Activated CD4-positive, alpha-beta T cell treated with anti-CD3 and anti-CD28 coated beads for 36 hours (primary cell): ENCODE measurements at regions of chr20 and their contacts with region 1.

Region 1: DNA sequence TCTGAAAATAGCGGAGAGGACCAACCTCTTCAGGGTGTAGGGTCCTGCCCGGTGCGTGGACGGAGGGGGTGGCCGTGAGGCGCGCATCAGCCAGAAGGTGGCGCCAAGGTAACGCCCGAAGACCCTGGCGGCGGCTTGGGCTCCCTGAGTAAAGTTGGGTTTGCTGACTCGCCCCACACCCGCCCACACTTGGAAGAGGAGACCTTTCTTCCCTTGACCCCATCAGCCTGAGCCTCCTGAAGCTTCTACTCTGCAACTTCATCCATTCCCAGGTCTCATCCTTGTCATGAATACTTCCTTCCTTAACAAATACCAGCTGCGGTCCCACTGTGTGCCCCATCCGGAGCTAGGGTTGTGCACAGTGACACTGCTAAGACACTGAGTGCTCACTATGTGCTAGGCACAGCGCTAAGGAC is 14.6 kb downstream of the CD40 start:
- DNase-seq: peak; percentile 81
- ATAC-seq: peak; percentile 96
- H3K4me3 Mint-ChIP-seq: no peak overlapping the region
- H3K27ac Mint-ChIP-seq: no peak overlapping the region
- H3K4me1 Mint-ChIP-seq: peaks cover 2% of the 10 kb centered on the region
- H3K27me3 Mint-ChIP-seq: peaks cover 32% of the 10 kb centered on the region

Region 2: DNA sequence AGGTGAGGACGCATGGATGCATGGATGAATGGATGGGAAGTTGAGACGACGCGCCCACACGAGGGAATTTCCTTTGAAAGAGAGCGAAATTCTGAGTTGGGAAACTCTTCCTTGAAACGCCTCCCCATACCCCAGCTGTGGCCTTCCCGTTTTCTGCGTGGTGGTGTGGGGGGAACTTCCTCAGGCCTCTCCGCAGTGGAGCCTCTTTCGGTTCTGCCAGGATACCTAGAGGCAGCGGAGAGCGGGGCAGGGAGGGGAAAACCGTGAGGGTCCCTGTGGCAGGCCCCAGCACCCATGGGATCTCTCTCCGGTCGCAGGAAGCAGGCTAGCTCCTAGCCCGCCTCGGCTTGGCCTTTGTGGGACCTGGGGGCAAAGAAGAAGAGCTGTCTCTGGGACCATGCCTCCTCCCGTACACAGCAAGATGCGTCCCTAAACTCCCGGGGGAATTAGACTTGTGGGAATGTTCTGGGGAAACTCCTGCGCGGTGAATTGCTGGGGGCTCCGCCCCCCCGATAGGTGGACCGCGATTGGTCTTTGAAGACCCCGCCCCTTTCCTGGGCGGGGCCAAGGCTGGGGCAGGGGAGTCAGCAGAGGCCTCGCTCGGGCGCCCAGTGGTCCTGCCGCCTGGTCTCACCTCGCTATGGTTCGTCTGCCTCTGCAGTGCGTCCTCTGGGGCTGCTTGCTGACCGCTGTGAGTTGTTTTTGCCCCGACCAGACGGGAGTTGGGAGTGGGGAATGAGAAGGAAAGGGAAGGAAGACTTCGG is 14.8 kb before region 1 on chr20 and contains the start of gene CD40:
- CTCF ChIA-PET with region 1: interaction called, 18 read pairs
- POLR2A ChIA-PET with region 1: no interaction called
- intact Hi-C with region 1: no loop called
- DNase-seq: peak; percentile 81
- ATAC-seq: peak; percentile 98
- H3K4me3 Mint-ChIP-seq: peak within 1 kb of the TSS; percentile 90
- H3K27ac Mint-ChIP-seq: peak within 1 kb of the TSS; percentile 78
- H3K4me1 Mint-ChIP-seq: peaks cover 11% of the 10 kb centered on the region
- H3K27me3 Mint-ChIP-seq: peaks cover 17% of the 10 kb centered on the region
- total RNA-seq, gene CD40: 4.0 to 5.1 TPM

Region 3: DNA sequence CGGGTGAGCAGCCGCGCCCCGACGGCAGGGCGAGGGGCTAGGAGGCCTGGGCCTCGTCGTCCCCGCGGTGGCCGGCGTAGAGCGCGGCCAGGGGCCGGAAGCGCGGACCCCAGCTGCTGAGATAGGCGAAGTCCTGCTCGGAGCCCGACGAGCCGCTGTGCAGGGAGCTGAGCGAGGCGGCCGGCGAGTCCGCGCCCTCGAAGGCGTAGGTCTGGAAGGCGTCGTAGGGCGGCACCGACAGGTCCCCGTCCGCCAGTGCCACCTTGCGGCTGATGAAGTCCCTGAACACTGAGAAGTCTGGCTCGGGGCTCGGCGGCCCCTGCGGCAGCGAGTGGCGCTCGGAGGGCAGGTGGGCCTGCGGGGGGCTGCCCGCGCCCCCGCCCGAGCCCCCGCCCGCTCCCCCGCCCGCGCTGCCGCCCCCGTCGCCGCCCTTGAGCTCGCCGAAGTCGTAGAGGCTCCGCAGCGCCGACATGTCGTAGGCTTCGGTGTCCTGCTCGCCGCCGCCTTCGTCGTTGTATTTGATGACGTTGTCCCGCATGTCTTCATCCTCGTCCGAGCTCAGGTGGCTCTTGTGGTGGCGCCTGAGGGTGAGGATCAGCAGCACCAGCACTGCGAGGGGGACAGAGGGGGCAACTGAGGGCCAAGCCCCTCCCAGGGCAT is 41.9 kb after region 1 on chr20:
- CTCF ChIA-PET with region 1: interaction called, 18 read pairs
- POLR2A ChIA-PET with region 1: no interaction called
- intact Hi-C with region 1: loop called (anchors 1 to 2 kb)
- DNase-seq: peak; percentile 88
- ATAC-seq: peak; percentile 97
- H3K4me3 Mint-ChIP-seq: no peak overlapping the region
- H3K27ac Mint-ChIP-seq: no peak overlapping the region
- H3K4me1 Mint-ChIP-seq: no peaks in the 10 kb centered on the region
- H3K27me3 Mint-ChIP-seq: peaks cover 37% of the 10 kb centered on the region

Region 4: GRCh38 chr20:46349035-46349741 is 216.5 kb after region 1 on chr20:
- CTCF ChIA-PET with region 1: interaction called, 6 read pairs
- POLR2A ChIA-PET with region 1: no interaction called
- intact Hi-C with region 1: loop called in 1 of 2 experiments (anchors 2 kb)
- DNase-seq: peak; percentile 75
- ATAC-seq: peak; percentile 60
- H3K4me3 Mint-ChIP-seq: no peak overlapping the region
- H3K27ac Mint-ChIP-seq: no peak overlapping the region
- H3K4me1 Mint-ChIP-seq: peaks cover 16% of the 10 kb centered on the region
- H3K27me3 Mint-ChIP-seq: no peaks in the 10 kb centered on the region

Region 5: GRCh38 chr20:46438156-46438750 is 305.5 kb after region 1 on chr20:
- CTCF ChIA-PET with region 1: interaction called, 11 read pairs
- POLR2A ChIA-PET with region 1: no interaction called
- intact Hi-C with region 1: loop called in 1 of 2 experiments (anchors 2 kb)
- DNase-seq: peak; percentile 28
- ATAC-seq: peak; percentile 44
- H3K4me3 Mint-ChIP-seq: no peak overlapping the region
- H3K27ac Mint-ChIP-seq: no peak overlapping the region
- H3K4me1 Mint-ChIP-seq: no peaks in the 10 kb centered on the region
- H3K27me3 Mint-ChIP-seq: peaks cover 9% of the 10 kb centered on the region

Region 6: GRCh38 chr20:46674253-46675083 is 541.8 kb after region 1 on chr20:
- CTCF ChIA-PET with region 1: no interaction called
- POLR2A ChIA-PET with region 1: no interaction called
- intact Hi-C with region 1: no loop called
- DNase-seq: no peak
- ATAC-seq: no peak
- H3K4me3 Mint-ChIP-seq: no peak overlapping the region
- H3K27ac Mint-ChIP-seq: no peak overlapping the region
- H3K4me1 Mint-ChIP-seq: no peaks in the 10 kb centered on the region
- H3K27me3 Mint-ChIP-seq: peaks cover 1% of the 10 kb centered on the region